A549 (cell line): ENCODE measurements at regions of chr19 and their contacts with region 1.

Region 1: GRCh38 chr19:50357178-50358100 is 8.0 kb downstream of the NAPSA start:
- DNase-seq: peak; percentile 68 to 82
- ATAC-seq: peak; percentile 84 to 89
- H3K4me3 ChIP-seq: peak overlapping the region; percentile 48
- H3K27ac ChIP-seq: peak overlapping the region; percentile 73 to 79
- H3K4me1 ChIP-seq: no peaks in the 10 kb centered on the region
- CTCF ChIP-seq: peak; percentile 90
- EP300 ChIP-seq: no peak
- POLR2A ChIP-seq: no peak
- RAD21 ChIP-seq: peak; percentile 90 to 93

Region 2: GRCh38 chr19:50329146-50329925 is 28.1 kb before region 1 on chr19 and contains the start of gene KCNC3:
- CTCF ChIA-PET with region 1: interaction called, 12 read pairs
- POLR2A ChIA-PET with region 1: interaction called, 5 read pairs
- DNase-seq: peak; percentile 99 to 100
- ATAC-seq: peak; percentile 54 to 83
- H3K4me3 ChIP-seq: peak within 1 kb of the TSS; percentile 60
- H3K27ac ChIP-seq: peak within 1 kb of the TSS; percentile 50 to 75; a peak in 5 of 6 replicates
- H3K4me1 ChIP-seq: peaks cover 45% of the 10 kb centered on the region
- CTCF ChIP-seq: no peak
- EP300 ChIP-seq: no peak
- POLR2A ChIP-seq: no peak; the same call in 1 of the 2 replicates
- RAD21 ChIP-seq: no peak
- polyA plus RNA-seq, gene KCNC3: 0.17 and 0.32 TPM in 2 replicates

Region 3: GRCh38 chr19:50368649-50369570 is 11.5 kb after region 1 on chr19:
- CTCF ChIA-PET with region 1: interaction called, 53 read pairs
- POLR2A ChIA-PET with region 1: interaction called, 5 read pairs
- DNase-seq: peak; percentile 95 to 99
- ATAC-seq: peak; percentile 95
- H3K4me3 ChIP-seq: peak overlapping the region; percentile 62
- H3K27ac ChIP-seq: peak overlapping the region; percentile 85 to 87
- H3K4me1 ChIP-seq: peaks cover 5% of the 10 kb centered on the region
- CTCF ChIP-seq: peak; percentile 94
- EP300 ChIP-seq: no peak
- POLR2A ChIP-seq: peak; percentile 79
- RAD21 ChIP-seq: peak; percentile 95

Region 4: GRCh38 chr19:50408633-50409032 is 51.2 kb after region 1 on chr19:
- CTCF ChIA-PET with region 1: interaction called, 12 read pairs
- POLR2A ChIA-PET with region 1: no interaction called
- DNase-seq: no peak
- ATAC-seq: no peak
- H3K4me3 ChIP-seq: no peak overlapping the region
- H3K27ac ChIP-seq: no peak overlapping the region
- H3K4me1 ChIP-seq: no peaks in the 10 kb centered on the region
- CTCF ChIP-seq: no peak
- EP300 ChIP-seq: no peak
- POLR2A ChIP-seq: no peak
- RAD21 ChIP-seq: no peak

Region 5: DNA sequence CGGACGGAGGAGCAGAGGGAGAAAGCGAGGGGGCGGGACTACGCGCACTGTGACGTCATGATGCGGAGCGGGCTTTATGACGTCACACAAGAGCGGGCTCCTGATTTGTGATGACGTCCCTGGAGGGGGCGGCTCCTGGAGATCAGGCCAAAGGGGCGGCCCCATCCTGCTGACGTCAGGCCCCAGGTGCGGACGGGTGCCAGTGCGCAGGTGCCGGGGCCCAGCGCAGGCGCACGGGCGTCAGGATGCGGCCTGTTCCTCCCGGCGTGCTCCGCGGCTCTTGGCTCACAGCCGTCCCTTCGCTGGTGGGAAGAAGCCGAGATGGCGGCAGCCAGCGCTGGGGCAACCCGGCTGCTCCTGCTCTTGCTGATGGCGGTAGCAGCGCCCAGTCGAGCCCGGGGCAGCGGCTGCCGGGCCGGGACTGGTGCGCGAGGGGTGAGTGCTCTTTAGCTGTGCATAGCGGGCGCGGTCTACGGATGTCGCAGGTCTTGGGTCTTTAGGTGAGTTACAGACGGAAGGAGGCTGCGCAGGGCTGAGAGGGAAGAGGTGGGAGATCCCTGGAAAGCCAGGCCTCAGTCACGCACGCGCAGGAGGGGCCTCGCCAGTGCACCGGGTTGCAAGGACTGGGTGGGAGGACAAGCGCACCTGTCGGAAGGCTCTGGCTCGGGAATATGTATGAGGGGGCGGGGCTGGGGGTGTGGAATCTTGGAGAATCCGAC is 118.9 kb after region 1 on chr19 and contains the starts of genes EMC10 and GARIN5A:
- CTCF ChIA-PET with region 1: interaction called, 29 read pairs
- POLR2A ChIA-PET with region 1: no interaction called
- DNase-seq: peak; percentile 99
- ATAC-seq: peak; percentile 73 to 91
- H3K4me3 ChIP-seq: peak within 1 kb of the TSS; percentile 86
- H3K27ac ChIP-seq: peak within 1 kb of the TSS; percentile 87 to 93
- H3K4me1 ChIP-seq: peaks cover 12% of the 10 kb centered on the region
- CTCF ChIP-seq: no peak
- EP300 ChIP-seq: no peak
- POLR2A ChIP-seq: peak; percentile 96
- RAD21 ChIP-seq: no peak
- polyA plus RNA-seq, gene EMC10: 52.8 and 54.0 TPM in 2 replicates
- polyA plus RNA-seq, gene GARIN5A: 0.57 and 1.1 TPM in 2 replicates

Region 6: GRCh38 chr19:50518091-50519005 is 160.9 kb after region 1 on chr19:
- CTCF ChIA-PET with region 1: no interaction called
- POLR2A ChIA-PET with region 1: no interaction called
- DNase-seq: peak in 1 of 2 experiments; percentile 50
- ATAC-seq: no peak
- H3K4me3 ChIP-seq: no peak overlapping the region
- H3K27ac ChIP-seq: no peak overlapping the region
- H3K4me1 ChIP-seq: peaks cover 10% of the 10 kb centered on the region; the same call in 1 of the 3 replicates
- CTCF ChIP-seq: no peak
- EP300 ChIP-seq: no peak
- POLR2A ChIP-seq: 0 out of 2 replicates have a peak, but pooled peaks have one; percentile 22
- RAD21 ChIP-seq: no peak